ENCODE measurements at regions of chr6 and their contacts with region 1.

Region 1: GRCh38 chr6:117555882-117556498 is 46.3 kb downstream of the GOPC start:
- DNase-seq: peak; percentile 12 to 47 (median 20)
- H3K4me3 ChIP-seq: no peak overlapping the region
- H3K4me3 Mint-ChIP-seq: no peak overlapping the region
- H3K27ac ChIP-seq: no peak overlapping the region
- H3K27ac Mint-ChIP-seq: no peak overlapping the region
- H3K4me1 ChIP-seq: no peaks in the 10 kb centered on the region
- H3K4me1 Mint-ChIP-seq: peaks cover 2% of the 10 kb centered on the region
- H3K27me3 ChIP-seq: no peaks in the 10 kb centered on the region
- H3K27me3 Mint-ChIP-seq: peaks cover 0 to 4% (median 2%) of the 10 kb centered on the region in 3 donors
- CTCF ChIP-seq: peak; percentile 92

Region 2: GRCh38 chr6:117346142-117346930 is 209.7 kb before region 1 on chr6:
- intact Hi-C with region 1: loop called in 1 of 2 experiments (anchors 10 kb)
- DNase-seq: peak in 1 of 3 donors; percentile 5
- H3K4me3 ChIP-seq: no peak overlapping the region
- H3K4me3 Mint-ChIP-seq: no peak overlapping the region
- H3K27ac ChIP-seq: no peak overlapping the region
- H3K27ac Mint-ChIP-seq: no peak overlapping the region
- H3K4me1 ChIP-seq: no peaks in the 10 kb centered on the region
- H3K4me1 Mint-ChIP-seq: no peaks in the 10 kb centered on the region
- H3K27me3 ChIP-seq: no peaks in the 10 kb centered on the region
- H3K27me3 Mint-ChIP-seq: peaks cover 1 to 4% (median 3%) of the 10 kb centered on the region in 3 donors
- CTCF ChIP-seq: peak; percentile 62

Region 3: GRCh38 chr6:117449549-117450439 is 106.2 kb before region 1 on chr6:
- intact Hi-C with region 1: loop called (anchors 2 to 5 kb)
- DNase-seq: peak; percentile 33 to 52 (median 50)
- H3K4me3 ChIP-seq: no peak overlapping the region
- H3K4me3 Mint-ChIP-seq: no peak overlapping the region
- H3K27ac ChIP-seq: no peak overlapping the region
- H3K27ac Mint-ChIP-seq: no peak overlapping the region
- H3K4me1 ChIP-seq: peaks cover 8% of the 10 kb centered on the region in 2 donors
- H3K4me1 Mint-ChIP-seq: peaks cover 12% of the 10 kb centered on the region
- H3K27me3 ChIP-seq: peaks cover 5% of the 10 kb centered on the region in 2 donors
- H3K27me3 Mint-ChIP-seq: peaks cover 15 to 28% (median 21%) of the 10 kb centered on the region in 3 donors
- CTCF ChIP-seq: peak; percentile 79

Measured in CD14-positive monocyte (primary cell).